Mammary epithelial cell (primary cell): ENCODE measurements at regions of chr19 and their contacts with region 1.

Region 1: DNA sequence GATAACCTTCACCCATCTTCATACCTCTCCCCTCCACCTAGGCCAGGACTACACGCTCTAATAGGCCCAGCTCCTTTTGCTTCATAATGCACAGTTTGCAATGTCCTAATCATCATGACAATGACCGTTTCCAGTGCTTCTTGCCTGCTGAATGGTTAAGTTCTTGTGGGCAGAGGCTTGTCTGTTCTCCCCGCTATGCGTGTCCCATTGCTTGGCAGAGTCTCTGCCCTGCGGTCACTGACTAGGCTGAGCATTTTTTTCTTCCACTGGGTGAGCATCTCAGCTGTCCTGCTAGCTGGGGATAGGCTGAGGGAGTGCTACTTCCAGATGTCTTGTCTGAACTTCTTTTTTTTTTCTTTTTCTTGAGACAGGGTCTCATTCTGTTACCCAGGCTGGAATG is 314.7 kb downstream of the UQCRFS1 start:
- DNase-seq: no peak
- H3K4me3 ChIP-seq: no peak overlapping the region
- H3K27ac ChIP-seq: no peak overlapping the region
- H3K4me1 ChIP-seq: no peaks in the 10 kb centered on the region
- H3K27me3 ChIP-seq: no peaks in the 10 kb centered on the region
- CTCF ChIP-seq: no peak

Region 2: DNA sequence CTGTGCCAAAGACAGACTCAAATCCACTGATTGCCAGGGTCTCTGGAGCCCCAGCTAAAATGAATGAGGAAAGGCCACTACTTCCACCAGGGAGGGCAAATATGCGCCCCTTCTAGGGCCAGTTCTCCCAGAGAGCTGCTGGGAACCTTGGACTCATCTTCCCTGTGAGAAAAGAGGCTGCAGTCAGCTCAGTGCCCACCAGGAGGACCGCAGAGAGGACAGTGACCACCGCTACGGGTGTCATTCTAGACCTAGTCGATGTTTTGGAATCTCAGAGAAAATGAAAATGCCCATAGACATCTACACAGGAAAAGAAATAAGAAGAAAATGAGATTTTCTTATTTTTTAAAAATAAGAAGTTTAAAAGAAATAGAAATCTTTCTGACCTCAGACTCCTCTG is 79.6 kb after region 1 on chr19:
- CTCF ChIA-PET with region 1: no interaction called
- dilution Hi-C with region 1: loop called (anchors 5 kb)
- in situ Hi-C with region 1: no loop called
- intact Hi-C with region 1: no loop called
- DNase-seq: no peak
- H3K4me3 ChIP-seq: no peak overlapping the region
- H3K27ac ChIP-seq: no peak overlapping the region
- H3K4me1 ChIP-seq: no peaks in the 10 kb centered on the region
- H3K27me3 ChIP-seq: no peaks in the 10 kb centered on the region
- CTCF ChIP-seq: no peak